Activated T-helper 1 cell treated with anti-CD3 and anti-CD28 coated beads, Interleukin-12 subunit alpha, Interleukin-12 subunit beta, Interleukin-2, Interleukin-4 antibody, amounts not matched to agents 30 ng/mL and 10 ng/mL and 1 ng/mL, durations not matched to agents 14 hours and 24 hours and 36 hours (primary cell): ENCODE measurements at regions of chr12 and their contacts with region 1.

Region 1: DNA sequence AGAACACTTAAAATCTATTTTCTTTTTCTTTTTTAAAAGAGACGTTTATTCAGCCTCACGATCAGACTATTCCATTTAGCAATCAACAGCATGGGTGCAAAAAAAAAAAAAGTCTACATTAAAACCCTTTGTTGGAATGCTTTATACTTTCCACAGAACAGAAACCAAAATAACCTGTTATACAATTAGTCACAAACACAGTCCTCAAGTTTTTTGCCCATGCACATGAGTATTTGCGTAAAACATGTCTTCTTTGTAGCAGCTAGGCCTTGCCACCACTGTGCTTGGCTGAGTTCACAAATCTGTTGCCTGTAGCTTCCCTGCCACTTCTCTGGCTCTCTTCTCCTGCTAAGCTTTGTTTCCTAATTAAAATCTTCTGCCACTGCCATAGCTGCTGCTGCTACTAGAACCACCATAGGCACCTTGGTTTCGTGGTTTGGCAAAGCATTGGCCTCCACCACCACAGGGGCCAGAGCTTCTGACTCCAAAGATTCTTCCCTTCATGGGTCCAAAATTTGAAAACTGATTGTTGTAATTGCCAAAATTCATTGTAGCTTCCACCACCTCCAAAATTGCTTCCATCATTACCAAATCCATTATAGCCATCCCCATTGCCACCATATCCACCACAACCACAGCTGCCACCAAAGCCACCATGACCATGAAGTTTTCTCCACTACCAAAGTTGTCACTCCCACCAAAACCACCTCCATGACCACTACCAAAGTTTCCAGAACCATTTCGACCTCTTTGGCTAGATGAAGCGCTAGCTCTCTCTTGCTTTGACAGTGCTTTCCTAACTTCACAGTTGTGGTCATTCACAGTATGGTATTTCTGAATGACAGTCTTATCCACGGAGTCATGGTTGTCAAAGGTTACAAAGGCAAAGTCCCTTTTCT is 38.1 kb downstream of the KLRG1 start:
- DNase-seq: no peak
- H3K4me3 Mint-ChIP-seq: peak overlapping the region; percentile 9
- H3K27ac Mint-ChIP-seq: peak overlapping the region; percentile 88
- H3K4me1 Mint-ChIP-seq: peaks cover 9% of the 10 kb centered on the region
- H3K27me3 Mint-ChIP-seq: no peaks in the 10 kb centered on the region

Region 2: GRCh38 chr12:8648576-8649205 is 378.7 kb before region 1 on chr12:
- intact Hi-C with region 1: loop called (anchors 1 kb)
- DNase-seq: peak; percentile 67
- H3K4me3 Mint-ChIP-seq: no peak overlapping the region
- H3K27ac Mint-ChIP-seq: peak overlapping the region; percentile 54
- H3K4me1 Mint-ChIP-seq: peaks cover 45% of the 10 kb centered on the region
- H3K27me3 Mint-ChIP-seq: peaks cover 53% of the 10 kb centered on the region

Region 3: DNA sequence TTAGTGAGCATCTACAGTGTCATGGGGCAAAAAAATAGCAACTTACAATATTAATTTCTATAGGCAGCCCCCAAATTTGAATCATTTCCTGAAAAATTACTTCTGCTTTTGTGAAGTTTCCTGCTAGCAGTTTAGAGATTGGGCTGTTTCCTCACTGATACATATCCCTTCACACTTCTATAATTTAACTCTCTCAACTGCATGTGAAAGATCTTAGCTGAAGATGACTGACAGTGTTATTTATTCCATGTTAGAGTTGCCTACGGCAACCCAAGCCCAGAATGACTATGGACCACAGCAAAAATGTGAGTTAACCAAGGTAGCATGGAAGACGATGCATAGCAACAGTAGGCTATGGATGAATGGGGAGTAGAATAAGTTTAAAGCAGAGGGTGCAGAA is 38.0 kb before region 1 on chr12 and contains the start of gene KLRG1:
- intact Hi-C with region 1: loop called (anchors 1 kb)
- DNase-seq: no peak
- H3K4me3 Mint-ChIP-seq: peak within 1 kb of the TSS; percentile 4
- H3K27ac Mint-ChIP-seq: no peak within 1 kb of the TSS
- H3K4me1 Mint-ChIP-seq: peaks cover 39% of the 10 kb centered on the region
- H3K27me3 Mint-ChIP-seq: no peaks in the 10 kb centered on the region
- total RNA-seq, gene KLRG1: 0.69 and 1.4 TPM in 2 replicates

Region 4: GRCh38 chr12:9039397-9039977 is 12.1 kb after region 1 on chr12:
- intact Hi-C with region 1: loop called (anchors 1 kb)
- DNase-seq: no peak
- H3K4me3 Mint-ChIP-seq: no peak overlapping the region
- H3K27ac Mint-ChIP-seq: no peak overlapping the region
- H3K4me1 Mint-ChIP-seq: peaks cover 30% of the 10 kb centered on the region
- H3K27me3 Mint-ChIP-seq: peaks cover 12% of the 10 kb centered on the region

Region 5: GRCh38 chr12:9732921-9733461 is 705.6 kb after region 1 on chr12 and contains the start of gene CLECL1:
- intact Hi-C with region 1: loop called (anchors 1 kb)
- DNase-seq: no peak
- H3K4me3 Mint-ChIP-seq: peak within 1 kb of the TSS; percentile 87
- H3K27ac Mint-ChIP-seq: peak within 1 kb of the TSS; percentile 89
- H3K4me1 Mint-ChIP-seq: peaks cover 76% of the 10 kb centered on the region
- H3K27me3 Mint-ChIP-seq: no peaks in the 10 kb centered on the region
- total RNA-seq, gene CLECL1: 7.6 and 9.1 TPM in 2 replicates

Region 6: DNA sequence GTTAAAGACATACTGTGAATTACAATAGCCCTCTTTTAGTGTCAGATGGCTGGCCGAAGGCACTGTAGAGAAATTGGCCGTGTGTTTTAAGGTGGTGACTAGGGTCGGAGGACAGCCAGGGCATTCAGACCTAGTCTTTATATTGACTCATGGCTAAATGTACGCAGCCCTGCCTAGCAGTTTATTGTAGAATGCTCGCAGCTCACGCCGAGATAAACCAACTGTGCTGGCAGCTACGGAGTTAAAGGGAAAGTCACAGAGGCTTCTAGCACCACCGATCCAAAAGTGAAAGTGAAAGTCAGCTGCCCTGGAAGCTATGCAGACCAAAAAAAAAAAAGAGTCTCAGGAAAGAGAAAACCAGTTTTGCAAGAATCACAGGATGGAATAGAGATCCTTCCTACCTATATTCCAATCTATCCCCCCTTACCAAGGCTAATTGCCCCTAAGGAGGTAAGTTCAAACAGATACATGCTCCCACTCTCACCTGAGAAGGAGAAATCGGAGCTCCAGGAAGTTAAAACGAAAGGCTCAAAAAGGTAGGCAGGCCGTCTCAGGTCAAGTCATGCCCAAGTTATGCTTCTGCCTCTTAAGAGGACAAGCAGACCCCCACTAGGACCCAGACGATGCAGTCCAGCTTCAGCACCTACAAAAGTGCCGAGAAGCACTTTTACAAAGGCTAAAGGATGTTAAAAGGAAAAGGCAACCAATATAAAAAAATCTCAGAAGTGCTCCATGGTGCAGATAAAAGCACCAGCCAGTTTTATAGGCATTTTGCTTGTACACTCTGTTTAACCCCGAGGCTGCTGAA is 1337.6 kb after region 1 on chr12:
- intact Hi-C with region 1: loop called (anchors 5 kb)
- DNase-seq: peak; percentile 52
- H3K4me3 Mint-ChIP-seq: no peak overlapping the region
- H3K27ac Mint-ChIP-seq: no peak overlapping the region
- H3K4me1 Mint-ChIP-seq: no peaks in the 10 kb centered on the region
- H3K27me3 Mint-ChIP-seq: peaks cover 39% of the 10 kb centered on the region